Activated B cell treated with CpG ODN at 0.5 μM for 24 hours (primary cell): ENCODE measurements at regions of chr13 and their contacts with region 1.

Region 1: DNA sequence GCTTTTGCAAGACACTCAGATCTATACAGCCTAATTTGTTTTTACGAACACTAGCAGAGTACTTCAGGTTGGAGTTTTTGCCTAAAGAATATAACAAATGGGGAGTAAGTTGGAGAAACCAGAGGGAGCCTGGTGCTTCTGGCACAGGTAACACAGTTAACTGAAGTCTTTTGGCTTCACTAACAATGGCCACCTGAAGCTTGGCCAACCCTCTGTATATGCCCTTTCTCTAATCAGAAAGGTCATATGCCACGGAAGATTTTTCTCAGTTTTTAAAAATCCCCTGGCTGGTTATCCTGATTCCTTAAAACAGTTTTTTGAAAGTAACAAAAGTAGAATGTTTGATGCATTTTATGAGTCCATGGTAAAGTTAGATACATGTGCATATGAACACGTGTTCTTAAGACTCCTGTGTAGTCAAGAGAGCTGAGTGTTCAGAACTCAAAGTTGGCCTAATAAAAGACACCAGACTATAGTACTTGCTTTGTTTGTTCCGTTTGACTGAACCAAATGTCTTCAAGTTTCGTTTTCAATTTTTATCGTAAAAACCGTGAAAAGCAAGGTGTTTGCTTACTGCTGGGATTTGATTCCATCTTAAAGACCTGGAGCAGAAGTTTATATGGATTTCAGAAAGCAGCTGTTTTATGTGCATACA is 137.5 kb downstream of the KCNRG start:
- DNase-seq: no peak
- ATAC-seq: peak; percentile 70
- H3K4me3 Mint-ChIP-seq: peak overlapping the region; percentile 76
- H3K27ac Mint-ChIP-seq: peak overlapping the region; percentile 75
- H3K4me1 Mint-ChIP-seq: peaks cover 30% of the 10 kb centered on the region
- H3K27me3 Mint-ChIP-seq: no peaks in the 10 kb centered on the region
- CTCF ChIP-seq: no peak

Region 2: GRCh38 chr13:48448959-48449614 is 1703.7 kb before region 1 on chr13:
- CTCF ChIA-PET with region 1: no interaction called
- POLR2A ChIA-PET with region 1: no interaction called
- intact Hi-C with region 1: no loop called
- DNase-seq: no peak
- ATAC-seq: no peak
- H3K4me3 Mint-ChIP-seq: no peak overlapping the region
- H3K27ac Mint-ChIP-seq: no peak overlapping the region
- H3K4me1 Mint-ChIP-seq: peaks cover 7% of the 10 kb centered on the region
- H3K27me3 Mint-ChIP-seq: no peaks in the 10 kb centered on the region
- CTCF ChIP-seq: no peak

Region 3: DNA sequence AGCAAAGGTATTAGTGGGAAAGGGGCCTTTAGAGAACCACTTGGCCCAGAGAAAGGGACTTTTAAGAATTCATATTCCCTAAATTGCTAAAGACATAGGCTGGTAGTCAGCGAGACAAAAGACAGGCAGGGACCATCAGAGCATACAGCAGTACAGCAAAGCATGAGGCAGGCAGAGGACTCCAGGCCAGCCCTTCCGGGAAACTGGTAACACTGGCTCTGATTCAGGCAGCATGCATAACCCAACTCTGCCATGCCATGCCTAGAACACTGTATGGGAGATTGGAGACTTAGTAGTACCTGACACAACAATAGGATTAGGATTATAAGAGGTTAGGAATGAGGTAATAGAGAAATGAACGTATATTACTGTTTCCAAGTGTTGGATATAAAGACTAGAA is 743.8 kb before region 1 on chr13:
- CTCF ChIA-PET with region 1: no interaction called
- POLR2A ChIA-PET with region 1: no interaction called
- intact Hi-C with region 1: no loop called
- DNase-seq: no peak
- ATAC-seq: no peak
- H3K4me3 Mint-ChIP-seq: no peak overlapping the region
- H3K27ac Mint-ChIP-seq: no peak overlapping the region
- H3K4me1 Mint-ChIP-seq: no peaks in the 10 kb centered on the region
- H3K27me3 Mint-ChIP-seq: no peaks in the 10 kb centered on the region
- CTCF ChIP-seq: no peak

Region 4: GRCh38 chr13:49516467-49516866 is 636.3 kb before region 1 on chr13:
- CTCF ChIA-PET with region 1: no interaction called
- POLR2A ChIA-PET with region 1: no interaction called
- intact Hi-C with region 1: no loop called
- DNase-seq: no peak
- ATAC-seq: no peak
- H3K4me3 Mint-ChIP-seq: no peak overlapping the region
- H3K27ac Mint-ChIP-seq: no peak overlapping the region
- H3K4me1 Mint-ChIP-seq: no peaks in the 10 kb centered on the region
- H3K27me3 Mint-ChIP-seq: no peaks in the 10 kb centered on the region
- CTCF ChIP-seq: no peak

Region 5: GRCh38 chr13:50192272-50192813 is 39.6 kb after region 1 on chr13:
- CTCF ChIA-PET with region 1: no interaction called
- POLR2A ChIA-PET with region 1: no interaction called
- intact Hi-C with region 1: loop called (anchors 5 kb)
- DNase-seq: no peak
- ATAC-seq: no peak
- H3K4me3 Mint-ChIP-seq: no peak overlapping the region
- H3K27ac Mint-ChIP-seq: no peak overlapping the region
- H3K4me1 Mint-ChIP-seq: peaks cover 2% of the 10 kb centered on the region
- H3K27me3 Mint-ChIP-seq: peaks cover 2% of the 10 kb centered on the region
- CTCF ChIP-seq: no peak

Region 6: DNA sequence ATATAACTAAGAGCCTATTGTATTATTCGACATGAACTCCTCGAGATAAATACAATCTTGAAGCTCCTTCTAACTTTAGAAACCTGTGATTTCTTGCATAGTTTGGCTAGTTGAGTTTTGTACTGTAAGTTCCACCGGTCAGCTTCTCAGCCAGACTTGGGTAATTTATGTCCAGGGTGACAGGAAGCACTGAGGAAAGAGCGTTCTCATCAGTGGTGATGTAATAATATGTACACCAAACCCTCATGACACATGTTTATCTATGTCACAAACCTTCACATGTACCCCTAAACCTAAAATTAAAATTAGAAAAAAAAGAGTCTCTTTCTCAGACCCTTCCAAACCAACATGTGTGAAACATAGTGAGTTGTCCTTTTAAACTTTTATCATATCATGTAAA is 68.2 kb after region 1 on chr13:
- CTCF ChIA-PET with region 1: no interaction called
- POLR2A ChIA-PET with region 1: no interaction called
- intact Hi-C with region 1: no loop called
- DNase-seq: no peak
- ATAC-seq: no peak
- H3K4me3 Mint-ChIP-seq: no peak overlapping the region
- H3K27ac Mint-ChIP-seq: no peak overlapping the region
- H3K4me1 Mint-ChIP-seq: peaks cover 20% of the 10 kb centered on the region
- H3K27me3 Mint-ChIP-seq: no peaks in the 10 kb centered on the region
- CTCF ChIP-seq: no peak